ENCODE measurements at regions of chr5 and their contacts with region 1.

Region 1: DNA sequence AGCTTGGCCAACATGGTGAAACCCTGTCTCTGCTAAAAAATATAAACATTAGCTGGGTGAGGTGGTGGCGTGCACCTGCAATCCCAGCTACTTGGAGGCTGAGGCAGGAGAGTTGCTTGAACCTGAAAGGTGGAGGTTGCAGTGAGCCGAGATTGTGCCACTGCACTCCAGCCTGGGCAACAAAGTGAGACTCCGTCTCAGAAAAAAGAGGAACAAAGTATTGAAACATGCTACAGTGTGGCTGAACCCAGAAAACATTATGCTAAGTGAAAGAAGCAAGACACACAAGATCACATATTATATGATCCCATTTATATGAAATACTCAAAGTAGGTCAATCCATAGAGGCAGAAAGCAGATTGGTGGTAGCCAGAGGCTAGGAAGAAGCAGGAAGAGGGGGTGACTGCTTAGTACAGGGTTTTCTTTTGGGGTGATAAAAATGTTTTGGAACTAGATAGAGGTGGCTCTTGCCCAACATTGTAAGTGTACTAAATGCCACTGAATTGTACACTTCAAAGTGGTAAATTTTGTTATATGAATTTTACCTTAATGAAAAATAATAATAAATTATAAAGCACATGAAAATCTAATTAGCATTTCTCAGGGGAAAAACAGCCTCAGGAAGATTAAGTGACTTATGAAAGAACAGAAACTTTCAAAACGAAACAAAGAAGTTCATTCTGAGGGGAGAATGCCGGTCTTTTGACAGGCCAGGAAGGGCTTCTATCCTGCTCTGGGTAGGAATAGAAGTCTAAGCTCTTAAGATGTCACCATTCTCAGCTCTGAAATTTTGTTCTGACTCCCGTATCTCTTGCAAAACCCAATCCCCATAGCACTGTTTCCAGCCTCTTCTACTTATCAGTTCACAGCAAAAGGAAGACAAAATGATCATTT is 161.1 kb upstream of the TBCA start:
- DNase-seq: peak; percentile 45
- CTCF ChIP-seq: no peak

Region 2: GRCh38 chr5:76893294-76893693 is 1044.0 kb before region 1 on chr5:
- CTCF ChIA-PET with region 1: no interaction called
- POLR2A ChIA-PET with region 1: no interaction called
- DNase-seq: no peak
- CTCF ChIP-seq: no peak

Region 3: GRCh38 chr5:77912721-77913120 is 24.5 kb before region 1 on chr5:
- CTCF ChIA-PET with region 1: no interaction called
- POLR2A ChIA-PET with region 1: no interaction called
- DNase-seq: no peak
- CTCF ChIP-seq: no peak

Region 4: GRCh38 chr5:77948476-77948875 is 11.2 kb after region 1 on chr5:
- CTCF ChIA-PET with region 1: interaction called, 13 read pairs
- POLR2A ChIA-PET with region 1: no interaction called
- DNase-seq: no peak
- CTCF ChIP-seq: no peak

Region 5: DNA sequence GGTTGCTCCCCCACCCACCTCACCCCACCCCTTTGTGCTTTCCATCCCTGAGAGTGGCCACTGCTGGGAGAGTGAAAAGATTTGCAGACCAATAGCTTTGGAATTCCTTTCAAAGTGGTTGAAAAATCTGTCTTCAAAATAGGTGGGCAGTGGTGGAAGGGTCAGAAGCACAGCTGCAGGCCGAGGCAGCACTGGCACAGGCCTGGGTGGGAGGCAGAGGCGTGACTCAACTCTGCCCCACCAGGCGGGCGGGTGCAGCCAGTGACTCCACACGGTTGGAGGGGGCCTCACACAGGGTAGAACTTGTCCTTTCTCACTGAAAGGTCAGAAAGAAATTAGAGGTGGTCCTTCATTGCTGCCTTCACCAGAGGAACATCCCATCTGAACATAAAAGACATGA is 53.8 kb after region 1 on chr5:
- CTCF ChIA-PET with region 1: no interaction called
- POLR2A ChIA-PET with region 1: no interaction called
- DNase-seq: no peak
- CTCF ChIP-seq: no peak

Measured in GM10248 (cell line).